Posterior vena cava (tissue), 2 donors: ENCODE measurements at regions of chr1 and their contacts with region 1.

Region 1: DNA sequence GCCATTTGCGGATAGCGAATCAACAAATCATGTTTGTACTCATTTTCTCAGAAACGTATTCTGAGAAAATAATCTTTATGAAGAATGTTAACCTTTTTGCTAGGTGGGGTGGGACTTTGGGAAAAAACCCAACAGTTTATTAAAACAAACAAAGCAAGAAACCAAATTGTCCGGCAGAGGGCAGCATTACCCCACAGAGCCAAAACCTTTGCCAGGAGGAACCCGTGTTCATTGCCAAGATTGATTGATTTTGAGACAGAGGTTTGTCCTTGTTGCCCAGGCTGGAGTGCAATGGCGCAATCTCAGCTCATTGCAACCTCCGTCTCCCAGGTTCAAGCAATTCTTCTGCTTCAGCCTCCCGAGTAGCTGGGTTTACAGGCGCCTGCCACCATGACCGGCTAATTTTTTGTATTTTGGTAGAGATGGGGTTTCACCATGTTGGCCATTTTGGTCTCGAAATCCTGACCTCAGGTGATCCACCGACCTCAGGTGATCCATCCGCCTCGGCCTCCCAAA is 70.8 kb upstream of the RHOU start:
- DNase-seq: peak; percentile 88

Region 2: GRCh38 chr1:228210076-228210651 is 454.3 kb before region 1 on chr1:
- intact Hi-C with region 1: no loop called
- DNase-seq: peak; percentile 63

Region 3: DNA sequence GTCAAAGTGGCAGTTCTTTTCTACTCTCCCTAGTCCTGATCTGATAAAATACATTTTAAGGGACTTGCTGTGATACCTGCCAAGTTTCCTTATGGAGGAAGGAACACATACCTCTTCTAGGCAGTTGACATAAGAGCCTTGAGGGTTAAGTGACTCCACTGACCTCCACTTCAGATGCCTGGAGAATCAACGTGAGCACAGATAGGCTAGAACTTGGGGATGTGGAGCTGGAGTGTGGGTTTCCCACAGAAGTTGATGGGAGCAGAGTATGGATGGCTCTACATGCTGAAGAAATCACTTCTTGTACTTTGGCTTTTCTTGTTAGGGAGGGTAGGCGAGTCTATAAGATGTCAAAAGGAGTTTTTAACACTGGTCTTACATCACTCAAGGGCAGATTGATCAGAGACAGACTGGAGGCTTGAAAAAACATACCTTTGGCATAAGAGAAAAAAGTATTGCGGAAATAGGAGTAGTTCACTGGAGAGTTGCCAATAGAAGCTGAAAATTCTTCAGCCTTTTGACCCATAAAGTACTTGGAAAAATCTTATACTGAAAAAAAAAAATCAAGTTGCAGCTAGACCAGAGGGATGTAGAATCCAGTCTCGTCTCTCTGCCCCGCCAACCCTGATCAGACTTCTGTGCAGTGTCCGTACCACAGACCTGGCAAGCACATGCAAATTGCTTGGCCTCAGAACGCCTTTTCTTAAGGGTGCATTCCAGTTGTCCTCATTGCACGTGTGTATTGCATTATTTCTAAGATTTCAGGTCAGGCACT is 76.3 kb after region 1 on chr1:
- intact Hi-C with region 1: no loop called
- DNase-seq: no peak

Region 4: DNA sequence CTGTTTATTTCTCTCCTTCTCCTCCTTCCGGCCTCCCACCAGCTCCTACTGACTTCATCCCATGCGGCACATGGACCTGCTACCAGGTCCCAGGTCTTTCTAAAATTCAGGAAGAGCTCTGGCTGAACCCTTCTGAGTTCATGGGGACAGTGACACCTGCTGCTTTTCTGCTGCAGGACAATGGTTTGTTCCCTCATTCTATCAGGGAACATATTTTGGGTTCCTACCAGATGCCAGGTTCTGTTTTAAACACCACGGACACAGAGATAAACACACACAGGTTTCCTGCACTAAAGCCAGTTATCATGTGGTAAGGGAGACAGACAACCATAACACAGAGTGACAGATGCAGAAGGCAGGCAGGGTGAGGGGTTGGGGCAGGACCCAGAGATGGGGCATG is 492.4 kb after region 1 on chr1:
- intact Hi-C with region 1: loop called in 1 of 2 experiments (anchors 5 kb)
- DNase-seq: no peak

Region 5: GRCh38 chr1:229227298-229227919 is 563.0 kb after region 1 on chr1:
- intact Hi-C with region 1: loop called (anchors 5 to 10 kb)
- DNase-seq: peak; percentile 94

Region 6: DNA sequence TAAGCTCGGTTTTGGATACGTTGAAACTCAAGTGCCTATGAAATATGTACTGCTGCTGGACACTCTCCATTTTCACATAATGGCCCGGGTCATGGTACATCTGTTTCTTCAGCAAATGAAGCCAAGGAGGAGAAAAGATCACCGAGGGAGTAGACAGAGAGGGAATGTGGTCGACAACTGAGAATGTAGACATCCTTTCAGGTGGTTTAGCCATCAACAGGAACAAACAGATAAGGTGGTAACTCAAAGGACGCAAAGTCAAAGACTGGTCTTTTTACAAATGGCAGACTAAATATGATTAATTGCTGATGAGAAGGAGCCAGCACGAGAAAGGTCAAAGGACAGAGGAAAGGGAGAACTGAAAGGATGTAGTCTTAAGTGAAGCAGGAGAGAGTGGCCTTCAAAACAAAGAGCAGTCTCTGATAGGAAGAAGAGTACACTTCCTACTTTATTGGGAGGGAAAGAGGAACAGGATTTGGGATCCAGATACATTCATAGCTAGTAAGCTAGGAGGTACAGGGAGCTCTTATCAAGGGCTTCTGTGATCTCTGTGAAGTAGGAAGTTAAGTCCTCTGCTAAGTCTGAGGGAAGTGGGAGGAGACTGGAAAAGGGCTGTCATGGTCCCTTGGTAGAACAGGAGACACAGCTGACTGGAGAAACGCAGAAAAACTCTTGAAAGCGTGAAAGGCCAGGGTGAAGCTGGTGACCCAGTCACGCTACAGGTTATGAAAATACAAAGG is 815.4 kb after region 1 on chr1:
- intact Hi-C with region 1: loop called in 1 of 2 experiments (anchors 10 kb)
- DNase-seq: no peak